Left cardiac atrium (tissue), 4 donors: ENCODE measurements at regions of chr2 and their contacts with region 1.

Region 1: GRCh38 chr2:201795607-201796477 is 10.5 kb upstream of the CDK15 start:
- DNase-seq: peak; percentile 30
- ATAC-seq: peak; percentile 49 to 59

Region 2: GRCh38 chr2:201915446-201915845 is 119.6 kb after region 1 on chr2:
- intact Hi-C with region 1: no loop called
- DNase-seq: no peak
- ATAC-seq: no peak

Region 3: GRCh38 chr2:202178342-202178958 is 382.6 kb after region 1 on chr2:
- intact Hi-C with region 1: loop called (anchors 5 kb)
- DNase-seq: peak; percentile 47
- ATAC-seq: peak; percentile 82 to 86